ENCODE measurements at regions of chr7 and their contacts with region 1.

Region 1: DNA sequence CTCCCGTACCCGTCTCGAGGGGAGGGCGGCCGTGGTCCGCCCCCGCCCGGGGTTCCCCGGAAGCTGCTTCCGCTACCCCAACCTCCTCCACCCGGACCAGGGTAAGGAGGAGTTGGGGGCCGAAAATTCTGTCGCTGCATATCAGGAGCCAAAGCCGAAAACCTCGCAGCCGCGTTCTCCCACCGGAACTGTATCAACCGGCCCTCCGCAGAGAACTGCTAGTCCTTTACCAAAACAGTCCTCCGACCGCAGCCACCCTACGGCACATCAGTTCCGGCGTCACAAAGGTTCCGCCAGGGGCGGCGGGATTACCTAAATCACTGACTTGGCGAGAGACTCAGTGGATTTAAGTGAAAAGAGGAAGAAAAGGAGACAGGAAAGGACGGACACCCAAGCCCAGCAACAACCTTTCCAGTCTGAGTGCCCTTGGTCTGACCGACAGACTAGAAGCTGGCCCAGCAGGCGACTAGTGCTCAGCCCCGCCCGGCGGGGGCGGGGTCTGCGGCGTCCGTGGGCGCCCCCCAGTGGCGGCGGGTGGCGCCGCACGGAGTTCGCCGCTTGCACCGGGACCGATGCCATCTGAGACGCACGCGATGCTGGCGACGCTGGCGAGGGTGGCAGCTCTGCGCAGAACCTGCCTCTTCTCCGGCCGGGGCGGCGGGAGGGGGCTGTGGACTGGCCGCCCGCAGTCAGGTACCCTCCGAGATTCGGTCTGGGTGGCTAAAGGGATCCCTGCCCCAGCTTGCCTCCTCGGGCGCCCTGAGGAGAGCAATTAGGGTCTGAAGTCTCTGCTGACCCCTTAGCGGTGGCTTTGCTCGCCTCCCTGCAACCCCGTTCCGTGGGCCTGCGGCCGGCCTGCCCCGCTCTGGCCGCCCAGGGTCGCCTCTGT is at the starts of genes MPLKIP and SUGCT:
- DNase-seq: peak; percentile 82 to 89
- ATAC-seq: peak; percentile 94 to 98 (median 96)
- H3K4me3 ChIP-seq: peak within 1 kb of the TSS; percentile 63 to 99 (median 88)
- H3K27ac ChIP-seq: peak within 1 kb of the TSS; percentile 89 to 96 (median 91)
- H3K4me1 ChIP-seq: peaks cover 0 to 42% (median 36%) of the 10 kb centered on the region in 9 donors
- H3K27me3 ChIP-seq: peaks cover 0 to 15% (median 0%) of the 10 kb centered on the region in 7 donors
- CTCF ChIP-seq: peak; percentile 98 to 100 (median 99)
- total RNA-seq, gene MPLKIP: 11.3 to 19.1 (median 15.6) TPM
- total RNA-seq, gene SUGCT: 3.5 to 8.1 (median 6.4) TPM

Region 2: DNA sequence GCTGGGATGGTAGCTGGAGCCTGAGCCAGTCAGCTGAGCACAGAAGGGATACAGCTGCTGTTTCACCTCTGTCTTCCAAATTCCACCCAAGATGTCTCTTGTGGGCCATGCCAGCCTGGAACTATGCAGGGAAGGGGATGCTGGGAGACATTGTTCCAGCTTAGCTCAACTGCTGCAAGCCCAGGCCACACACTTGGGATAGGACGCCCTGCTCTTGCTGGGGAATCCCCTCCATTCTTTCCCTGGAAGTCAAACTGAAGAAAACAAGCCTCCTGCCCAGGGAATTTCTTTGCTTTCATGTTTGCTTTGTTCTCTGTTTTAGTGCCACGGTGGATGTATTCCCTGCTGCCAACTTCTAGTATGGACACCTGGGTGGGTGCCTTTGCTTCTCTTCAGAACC is 239.8 kb before region 1 on chr7:
- intact Hi-C with region 1: loop called in 3 of 10 experiments (anchors 5 to 10 kb)
- DNase-seq: no peak
- ATAC-seq: no peak
- H3K4me3 ChIP-seq: no peak overlapping the region
- H3K27ac ChIP-seq: no peak overlapping the region
- H3K4me1 ChIP-seq: peaks cover 0 to 11% (median 0%) of the 10 kb centered on the region in 9 donors
- H3K27me3 ChIP-seq: peaks cover 0 to 10% (median 0%) of the 10 kb centered on the region in 7 donors
- CTCF ChIP-seq: no peak

Region 3: DNA sequence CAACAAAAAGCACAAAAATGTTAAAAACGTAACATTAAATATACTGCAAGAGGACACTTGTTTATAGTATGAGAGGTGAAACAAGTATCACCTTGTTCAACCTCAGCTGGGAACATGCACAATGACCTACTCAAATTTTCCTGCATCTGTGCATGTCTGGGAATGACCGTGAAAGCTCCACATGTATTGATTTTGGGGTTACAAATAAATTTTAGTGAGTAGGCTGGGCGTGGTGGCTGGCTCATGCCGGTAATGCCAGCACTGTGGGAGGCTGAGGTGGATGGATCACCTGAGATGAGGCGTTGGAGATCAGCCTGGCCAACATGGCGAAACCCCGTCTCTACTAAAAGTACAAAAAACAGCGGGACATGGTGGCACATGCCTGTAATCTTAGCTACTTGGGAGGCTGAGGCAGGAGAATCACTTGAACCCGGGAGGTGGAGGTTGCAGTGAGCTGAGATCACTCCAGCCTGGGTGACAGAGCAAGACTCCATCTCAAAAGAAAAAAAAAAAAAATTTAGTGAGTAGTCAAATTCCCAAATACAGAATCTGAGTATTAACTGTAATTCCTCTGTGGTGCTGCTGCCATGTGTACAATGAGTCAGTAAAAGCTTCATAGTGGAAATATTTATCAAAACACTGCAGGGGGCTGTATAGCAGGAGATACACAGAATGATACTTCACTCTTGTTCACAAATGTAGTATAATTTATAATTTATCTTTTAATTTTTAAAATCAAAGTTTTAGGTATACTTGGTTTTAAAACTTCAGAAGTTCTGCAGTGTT is 41.2 kb after region 1 on chr7:
- intact Hi-C with region 1: no loop called
- DNase-seq: no peak
- ATAC-seq: no peak
- H3K4me3 ChIP-seq: no peak overlapping the region
- H3K27ac ChIP-seq: no peak overlapping the region
- H3K4me1 ChIP-seq: no peaks in the 10 kb centered on the region
- H3K27me3 ChIP-seq: no peaks in the 10 kb centered on the region
- CTCF ChIP-seq: no peak

Measured in heart right ventricle (tissue), 16 donors.